HEK293T (cell line): ENCODE measurements at regions of chr9 and their contacts with region 1.

Region 1: DNA sequence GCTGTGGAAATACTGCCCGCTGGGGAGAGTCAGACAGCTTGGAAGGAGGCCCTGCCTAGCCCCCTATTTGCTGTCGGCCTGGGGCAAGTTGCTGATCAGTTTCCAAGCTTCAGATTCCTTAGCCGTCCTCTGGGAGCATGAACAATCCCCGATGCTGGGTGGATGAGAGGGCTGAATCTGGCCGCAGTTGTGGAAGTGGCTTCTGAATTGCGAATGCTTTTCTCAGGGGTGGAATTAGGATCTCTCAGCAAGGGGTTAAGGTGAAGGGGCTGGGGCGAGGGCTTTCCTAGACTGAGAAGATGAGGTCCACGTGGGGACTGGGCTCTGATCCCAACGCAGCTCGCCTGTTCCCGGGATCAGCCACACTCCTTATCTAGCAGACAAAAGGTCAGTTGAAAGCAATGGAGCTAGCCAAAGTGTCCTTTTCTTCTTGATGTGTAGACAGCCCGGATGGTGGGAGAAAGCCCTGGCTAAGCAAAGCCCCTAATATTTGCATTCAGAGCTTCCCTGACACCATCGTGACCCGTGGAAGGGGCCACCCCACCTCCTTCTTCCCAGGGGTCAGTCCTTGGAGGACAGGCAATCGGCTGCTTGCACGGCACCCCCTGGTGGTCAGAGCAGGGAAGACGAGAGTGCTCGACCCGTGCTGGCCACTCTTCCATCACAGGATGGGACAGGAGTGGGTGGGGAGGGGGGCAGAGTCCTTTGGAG is 54.9 kb downstream of the COL15A1 start:
- DNase-seq: peak; percentile 80

Region 2: DNA sequence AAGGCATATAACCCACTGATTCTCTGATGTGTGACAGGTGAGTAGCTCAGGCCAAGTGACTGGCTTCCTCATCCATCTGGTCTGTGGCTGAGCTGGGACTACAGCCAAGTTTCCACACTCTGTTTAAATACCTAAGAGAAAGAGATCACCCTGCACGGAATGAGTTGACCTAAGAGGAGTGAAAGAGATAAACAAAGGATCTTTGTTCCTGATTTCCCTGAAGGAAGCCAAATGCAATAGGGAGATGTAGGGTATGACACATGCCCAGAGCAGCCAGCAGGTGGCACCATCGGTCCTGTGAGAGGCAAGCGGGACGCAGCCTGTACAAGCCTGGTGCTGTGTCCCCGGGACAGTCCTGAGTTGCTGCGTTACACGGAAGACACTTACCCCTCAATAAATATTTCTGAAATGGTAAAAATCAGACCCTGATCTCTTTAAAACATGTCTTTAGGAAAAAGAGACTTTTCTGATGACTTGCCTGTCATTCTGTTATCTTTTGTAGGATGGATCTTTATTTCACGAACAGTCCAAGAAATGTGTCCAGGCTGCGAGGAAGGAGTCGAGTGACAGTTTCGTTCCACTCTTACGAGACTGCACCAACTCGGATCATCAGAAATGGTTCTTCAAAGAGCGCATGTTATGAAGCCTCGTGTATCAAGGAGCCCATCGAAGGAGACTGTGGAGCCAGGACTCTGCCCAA is 150.0 kb before region 1 on chr9:
- CTCF ChIA-PET with region 1: interaction called, 18 read pairs
- POLR2A ChIA-PET with region 1: interaction called, 3 read pairs
- DNase-seq: peak; percentile 87

Region 3: GRCh38 chr9:98860871-98861293 is 137.7 kb before region 1 on chr9:
- CTCF ChIA-PET with region 1: interaction called, 10 read pairs
- POLR2A ChIA-PET with region 1: no interaction called
- DNase-seq: peak; percentile 23

Region 4: GRCh38 chr9:99076483-99077171 is 78.0 kb after region 1 on chr9:
- CTCF ChIA-PET with region 1: no interaction called
- POLR2A ChIA-PET with region 1: no interaction called
- DNase-seq: no peak

Region 5: DNA sequence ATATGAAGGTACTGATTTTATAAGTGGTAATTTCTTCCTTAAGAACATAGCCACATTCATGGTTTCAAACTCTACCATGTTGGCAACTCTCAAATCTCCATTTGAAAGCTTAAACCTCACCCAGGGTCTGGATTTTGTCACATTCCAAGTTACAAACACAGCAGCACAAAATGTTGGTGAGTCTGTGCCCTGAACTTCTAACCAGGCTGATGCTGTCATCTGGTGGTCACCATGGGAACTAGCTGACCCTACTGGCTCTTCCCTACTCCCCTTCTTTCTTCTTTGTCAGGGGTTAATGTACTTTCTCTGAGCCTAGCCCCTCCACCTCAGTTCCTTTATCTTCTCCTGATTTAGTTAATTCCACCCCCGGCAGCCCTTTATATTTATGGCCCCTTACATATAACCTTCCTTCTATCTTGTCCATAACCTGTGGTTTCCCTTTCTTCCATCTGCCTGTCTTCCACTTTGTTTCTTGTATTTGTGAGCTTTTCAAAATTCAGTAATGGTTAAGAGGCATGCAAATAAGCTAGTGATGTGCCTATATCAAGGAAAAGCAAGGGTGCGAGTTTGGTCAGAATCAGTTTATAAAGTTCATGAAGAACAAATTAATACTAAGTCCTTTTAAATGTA is 142.2 kb after region 1 on chr9:
- CTCF ChIA-PET with region 1: interaction called, 22 read pairs
- POLR2A ChIA-PET with region 1: no interaction called
- DNase-seq: peak; percentile 57